Activated CD4-positive, alpha-beta T cell treated with anti-CD3 and anti-CD28 coated beads, Interleukin-2, amount 10 ng/mL, durations not matched to agents 24 days and 14 days (primary cell): ENCODE measurements at regions of chr2 and their contacts with region 1.

Region 1: GRCh38 chr2:152175458-152176325 is at the start of gene STAM2:
- DNase-seq: peak; percentile 98
- H3K4me3 Mint-ChIP-seq: peak within 1 kb of the TSS; percentile 99
- H3K27ac Mint-ChIP-seq: peak within 1 kb of the TSS; percentile 99
- H3K4me1 Mint-ChIP-seq: peaks cover 30% of the 10 kb centered on the region
- H3K27me3 Mint-ChIP-seq: peaks cover 5% of the 10 kb centered on the region
- total RNA-seq, gene STAM2: 16.9 and 22.2 TPM in 2 replicates

Region 2: DNA sequence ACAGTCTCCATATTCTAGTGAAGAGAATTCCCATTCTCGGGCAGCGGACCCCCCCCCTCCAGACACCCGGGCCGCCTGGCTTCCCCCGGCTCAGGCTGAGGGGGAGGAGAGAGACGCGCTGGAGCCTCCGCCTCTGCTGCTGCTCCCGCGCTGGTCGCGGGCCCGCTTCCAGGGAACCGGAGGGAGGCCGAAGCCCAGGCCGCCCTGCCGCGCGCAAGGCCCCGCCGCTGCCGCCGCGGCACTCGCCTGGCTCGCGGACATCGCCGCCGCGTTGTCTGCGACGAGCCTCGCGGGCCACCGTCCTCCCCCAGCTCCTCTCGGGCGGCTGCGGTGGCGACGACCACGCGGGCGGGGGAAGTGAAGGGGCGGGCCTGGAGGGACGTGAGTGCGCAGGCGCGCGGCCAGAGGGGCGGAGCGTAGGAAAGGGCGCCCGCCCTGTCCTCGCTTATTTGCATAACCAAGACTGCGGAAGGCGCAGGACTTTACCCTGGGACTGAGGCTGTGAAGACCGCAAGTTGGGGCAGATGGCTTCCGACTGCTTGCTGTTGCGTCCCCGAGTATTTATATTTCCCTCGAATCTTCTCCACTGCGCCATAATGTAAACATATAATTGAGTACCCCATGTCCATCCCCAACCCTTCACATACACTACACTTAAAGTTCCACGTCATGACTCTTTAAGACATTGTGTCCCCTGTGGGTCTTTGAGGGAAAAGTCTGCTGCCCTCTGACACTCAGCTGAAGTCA is 347.4 kb before region 1 on chr2 and contains the start of gene ARL5A:
- intact Hi-C with region 1: loop called (anchors 10 kb)
- DNase-seq: peak; percentile 99
- H3K4me3 Mint-ChIP-seq: peak within 1 kb of the TSS; percentile 94
- H3K27ac Mint-ChIP-seq: peak within 1 kb of the TSS; percentile 91
- H3K4me1 Mint-ChIP-seq: peaks cover 29% of the 10 kb centered on the region
- H3K27me3 Mint-ChIP-seq: peaks cover 5% of the 10 kb centered on the region
- total RNA-seq, gene ARL5A: 77.5 and 79.5 TPM in 2 replicates

Region 3: DNA sequence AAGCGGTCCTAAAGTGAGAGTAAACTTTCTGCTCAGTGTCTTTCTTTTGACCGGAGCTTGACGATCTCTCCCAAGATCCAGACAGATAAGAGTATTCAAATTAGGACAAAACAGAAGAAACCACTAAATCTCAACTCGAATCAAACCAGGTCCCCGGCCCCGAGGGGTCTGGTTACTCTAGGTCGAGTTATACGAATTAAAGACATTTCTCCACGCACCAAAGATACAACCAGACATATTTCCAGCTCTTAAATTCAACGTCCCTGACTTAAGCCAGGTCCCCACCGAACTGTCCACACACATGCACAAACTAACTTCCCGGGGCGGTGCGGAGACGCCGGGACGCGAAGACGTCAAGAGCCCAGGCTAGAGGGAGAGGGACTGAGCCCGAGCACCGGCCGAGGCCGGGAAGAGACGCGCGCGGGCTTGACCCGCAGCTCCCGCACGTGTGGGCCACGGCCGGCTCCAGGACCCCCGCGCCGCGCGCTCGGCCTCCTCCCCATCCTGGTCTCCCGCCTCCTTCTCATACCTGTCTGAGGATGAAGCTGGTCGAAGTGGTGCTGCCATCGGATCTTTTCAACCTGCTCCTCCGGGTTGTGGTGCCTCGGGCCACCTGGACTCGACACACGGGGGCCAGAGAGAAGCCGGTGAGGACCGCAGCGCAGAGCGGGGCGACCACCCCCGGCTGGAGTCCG is 77.7 kb before region 1 on chr2:
- intact Hi-C with region 1: loop called (anchors 2 kb)
- DNase-seq: peak; percentile 59
- H3K4me3 Mint-ChIP-seq: peak overlapping the region; percentile 84
- H3K27ac Mint-ChIP-seq: peak overlapping the region; percentile 4
- H3K4me1 Mint-ChIP-seq: peaks cover 16% of the 10 kb centered on the region
- H3K27me3 Mint-ChIP-seq: peaks cover 58% of the 10 kb centered on the region

Region 4: GRCh38 chr2:152335010-152335725 is 159.5 kb after region 1 on chr2 and contains the start of gene FMNL2:
- intact Hi-C with region 1: loop called (anchors 2 kb)
- DNase-seq: peak; percentile 90
- H3K4me3 Mint-ChIP-seq: peak within 1 kb of the TSS; percentile 84
- H3K27ac Mint-ChIP-seq: peak within 1 kb of the TSS; percentile 18
- H3K4me1 Mint-ChIP-seq: peaks cover 11% of the 10 kb centered on the region
- H3K27me3 Mint-ChIP-seq: peaks cover 47% of the 10 kb centered on the region
- total RNA-seq, gene FMNL2: 13.5 and 14.9 TPM in 2 replicates

Region 5: DNA sequence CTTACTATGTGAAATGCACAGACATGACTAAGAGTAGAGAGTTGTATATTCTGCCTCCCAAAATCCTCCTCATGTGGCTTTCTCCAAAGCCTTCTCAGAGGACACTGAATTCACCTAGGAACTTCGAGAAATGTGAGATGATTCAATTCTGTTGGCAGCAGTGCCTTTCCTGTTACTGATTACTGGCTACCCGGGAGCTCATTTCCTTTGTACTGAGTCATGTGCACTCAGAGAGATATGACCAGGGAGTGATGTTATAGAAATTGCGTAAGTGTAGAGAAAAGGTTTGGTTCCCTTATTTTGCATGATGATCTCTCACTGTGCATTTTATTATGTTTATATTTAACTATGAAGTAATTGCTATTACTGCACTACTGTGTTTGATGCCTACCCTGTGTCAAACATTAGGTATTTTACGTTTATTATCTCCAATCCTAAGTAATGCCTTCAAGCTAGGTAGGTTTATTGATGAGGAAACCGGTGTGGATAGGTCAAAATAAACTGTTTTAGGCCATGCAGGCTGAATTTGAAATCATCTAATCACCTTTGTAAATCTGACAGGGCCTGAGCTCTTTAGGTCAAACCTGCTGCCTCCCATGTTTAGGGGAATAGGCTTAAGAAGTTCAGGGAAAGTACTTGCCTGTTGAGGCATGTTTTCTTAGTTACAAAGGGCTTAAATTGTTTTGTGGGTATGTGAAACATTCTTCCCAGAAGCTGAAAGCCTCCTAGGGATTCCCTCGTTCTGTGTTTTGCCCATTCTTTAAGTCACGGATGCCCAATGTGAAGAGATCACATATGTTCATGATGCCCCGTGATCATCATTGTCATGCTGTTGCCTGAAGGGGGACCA is 246.1 kb after region 1 on chr2:
- intact Hi-C with region 1: loop called (anchors 5 kb)
- DNase-seq: peak; percentile 60
- H3K4me3 Mint-ChIP-seq: no peak overlapping the region
- H3K27ac Mint-ChIP-seq: peak overlapping the region; percentile 38
- H3K4me1 Mint-ChIP-seq: peaks cover 18% of the 10 kb centered on the region
- H3K27me3 Mint-ChIP-seq: peaks cover 1% of the 10 kb centered on the region

Region 6: GRCh38 chr2:152573168-152573567 is 397.5 kb after region 1 on chr2:
- intact Hi-C with region 1: loop called (anchors 5 kb)
- DNase-seq: peak; percentile 70
- H3K4me3 Mint-ChIP-seq: no peak overlapping the region
- H3K27ac Mint-ChIP-seq: peak overlapping the region; percentile 19
- H3K4me1 Mint-ChIP-seq: peaks cover 5% of the 10 kb centered on the region
- H3K27me3 Mint-ChIP-seq: no peaks in the 10 kb centered on the region

Region 7: DNA sequence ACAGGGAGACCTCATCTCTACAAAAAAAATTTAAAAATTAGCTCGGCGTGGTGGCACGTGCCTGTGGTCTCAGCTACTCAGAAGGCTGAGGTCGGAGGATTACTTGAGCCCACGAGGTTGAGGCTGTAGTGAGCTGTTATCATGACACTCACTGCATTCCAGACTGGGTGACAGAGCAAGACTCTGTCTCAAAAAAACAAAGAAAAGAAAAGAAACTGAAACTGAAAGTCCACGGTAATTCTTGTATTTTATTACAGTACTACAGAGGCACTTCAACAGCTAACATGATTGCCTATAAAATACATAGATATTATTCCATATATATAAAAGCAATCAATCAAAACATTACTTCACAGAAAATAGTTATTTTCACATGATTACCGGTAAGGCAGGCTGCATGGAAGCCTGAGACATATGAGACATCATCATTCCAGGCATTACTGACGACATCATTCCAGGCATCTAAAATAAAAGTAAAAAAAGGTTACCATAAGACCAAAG is 518.5 kb after region 1 on chr2:
- intact Hi-C with region 1: loop called (anchors 1 kb)
- DNase-seq: peak; percentile 81
- H3K4me3 Mint-ChIP-seq: peak overlapping the region; percentile 81
- H3K27ac Mint-ChIP-seq: peak overlapping the region; percentile 93
- H3K4me1 Mint-ChIP-seq: peaks cover 23% of the 10 kb centered on the region
- H3K27me3 Mint-ChIP-seq: no peaks in the 10 kb centered on the region